Prostate gland (tissue), 2 donors: ENCODE measurements at regions of chr10 and their contacts with region 1.

Region 1: DNA sequence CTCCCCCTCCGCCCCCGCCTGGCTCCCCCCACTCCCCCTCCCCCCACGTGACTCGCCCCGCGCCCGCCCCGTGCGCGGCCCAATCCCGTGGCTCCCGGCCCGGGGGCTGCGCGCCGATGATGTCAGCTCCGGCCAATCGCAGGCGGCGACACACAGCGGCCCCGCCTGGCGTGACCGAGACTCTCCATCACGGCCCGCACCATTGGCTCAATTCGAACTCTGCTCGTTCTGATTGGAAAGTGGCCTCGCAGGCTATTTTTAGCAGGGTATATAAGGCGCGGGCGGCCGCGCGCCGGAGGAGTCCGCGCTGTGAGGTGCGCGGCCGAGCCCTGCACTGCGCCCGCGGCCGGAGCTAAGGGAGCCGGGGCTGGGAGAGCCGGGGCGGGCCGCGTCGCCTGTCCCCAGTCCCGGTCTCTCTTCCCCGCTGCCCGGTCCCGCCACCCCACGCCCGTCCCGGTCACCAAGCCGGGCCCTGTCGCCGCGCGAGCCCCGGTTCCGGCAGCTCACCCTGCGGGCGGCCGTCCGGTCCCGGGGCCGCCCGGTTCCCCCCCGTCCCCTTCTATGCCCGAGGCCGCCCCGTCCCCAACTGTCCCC is 345 bp upstream of the KLF6 start:
- DNase-seq: peak; percentile 99
- H3K4me3 ChIP-seq: peak overlapping the region; percentile 84 to 96
- H3K27ac ChIP-seq: peak overlapping the region; percentile 100
- H3K4me1 ChIP-seq: no peaks in the 10 kb centered on the region
- H3K27me3 ChIP-seq: no peaks in the 10 kb centered on the region
- CTCF ChIP-seq: peak in 1 of 4 experiments; percentile 45
- POLR2A ChIP-seq: peak; percentile 99

Region 2: GRCh38 chr10:3467052-3467951 is 318.1 kb before region 1 on chr10:
- intact Hi-C with region 1: loop called (anchors 5 kb)
- DNase-seq: peak; percentile 68
- H3K4me3 ChIP-seq: no peak overlapping the region
- H3K27ac ChIP-seq: peak overlapping the region; percentile 75 to 80
- H3K4me1 ChIP-seq: peaks cover 17% of the 10 kb centered on the region
- H3K27me3 ChIP-seq: no peaks in the 10 kb centered on the region
- CTCF ChIP-seq: peak in 2 of 4 experiments; percentile 34 to 55
- POLR2A ChIP-seq: peak; percentile 31

Region 3: GRCh38 chr10:3811291-3811870 is 26.0 kb after region 1 on chr10:
- intact Hi-C with region 1: loop called (anchors 2 kb)
- DNase-seq: peak; percentile 52
- H3K4me3 ChIP-seq: no peak overlapping the region
- H3K27ac ChIP-seq: peak overlapping the region; percentile 79 to 82
- H3K4me1 ChIP-seq: peaks cover 2% of the 10 kb centered on the region
- H3K27me3 ChIP-seq: no peaks in the 10 kb centered on the region
- CTCF ChIP-seq: no peak
- POLR2A ChIP-seq: no peak

Region 4: DNA sequence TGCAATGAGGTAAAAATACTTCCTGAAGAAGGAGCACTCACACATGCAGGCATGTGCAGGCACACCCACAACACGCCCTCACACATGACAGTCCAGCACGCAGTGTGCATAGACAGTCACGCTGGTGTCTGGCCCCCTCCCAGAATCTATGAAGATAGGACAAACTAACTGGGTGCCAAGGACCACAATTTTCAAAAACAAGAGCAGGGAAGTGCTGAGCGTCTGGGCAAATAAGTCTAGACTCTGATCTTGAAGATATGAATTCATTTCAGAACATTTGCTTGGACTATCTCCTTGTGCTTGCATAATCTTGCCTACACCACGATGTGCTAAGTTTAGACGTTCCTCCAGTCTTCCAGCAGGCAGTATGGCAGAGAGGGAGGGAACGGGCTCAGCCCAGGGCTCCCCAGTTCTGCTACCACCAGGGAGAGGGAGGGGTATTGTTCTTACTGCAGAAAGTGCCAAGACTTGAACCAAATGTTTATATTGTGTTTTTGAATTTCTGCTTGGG is 276.1 kb after region 1 on chr10:
- intact Hi-C with region 1: loop called (anchors 2 kb)
- DNase-seq: peak; percentile 97
- H3K4me3 ChIP-seq: no peak overlapping the region
- H3K27ac ChIP-seq: peak overlapping the region; percentile 11 to 38
- H3K4me1 ChIP-seq: peaks cover 3% of the 10 kb centered on the region
- H3K27me3 ChIP-seq: no peaks in the 10 kb centered on the region
- CTCF ChIP-seq: no peak
- POLR2A ChIP-seq: no peak

Region 5: DNA sequence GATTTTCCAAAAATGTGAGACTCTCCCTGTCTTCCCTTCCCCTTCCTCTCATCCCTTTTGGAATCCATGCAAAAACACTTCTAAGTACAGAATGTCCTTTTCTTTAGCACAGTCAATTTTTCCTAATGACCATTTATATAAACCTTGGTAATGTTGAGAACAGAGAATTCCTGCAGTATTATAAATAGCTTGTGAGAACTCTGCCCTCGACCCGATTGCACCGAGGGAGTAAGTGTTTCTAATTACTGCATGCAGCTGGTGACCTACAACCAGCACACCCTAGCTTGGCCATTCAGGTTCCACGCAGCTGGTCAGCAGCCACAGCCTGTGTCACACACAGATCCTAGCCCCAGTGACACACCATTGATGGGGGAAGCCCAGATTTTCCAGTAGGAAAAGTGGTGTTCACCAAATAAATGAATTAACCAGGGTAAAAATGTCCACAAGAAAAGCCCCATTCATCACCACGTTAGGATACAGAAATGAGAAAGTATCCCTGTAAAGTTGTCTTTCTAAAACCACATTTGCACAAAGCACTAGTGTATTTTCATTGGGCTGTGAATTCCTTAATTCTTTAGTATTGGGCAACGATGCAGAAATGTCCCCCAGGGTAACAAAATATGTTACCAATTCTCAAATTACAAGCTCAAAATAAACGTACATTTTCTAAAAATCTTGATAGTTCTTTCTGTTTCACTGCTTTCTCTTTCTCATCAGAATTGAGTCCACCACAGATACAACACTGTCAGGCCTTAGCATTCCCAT is 498.7 kb after region 1 on chr10:
- intact Hi-C with region 1: loop called (anchors 5 kb)
- DNase-seq: no peak
- H3K4me3 ChIP-seq: no peak overlapping the region
- H3K27ac ChIP-seq: peak overlapping the region; percentile 29 to 54
- H3K4me1 ChIP-seq: peaks cover 2% of the 10 kb centered on the region
- H3K27me3 ChIP-seq: no peaks in the 10 kb centered on the region
- CTCF ChIP-seq: no peak
- POLR2A ChIP-seq: no peak